ENCODE measurements at regions of chr19 and their contacts with region 1.

Region 1: DNA sequence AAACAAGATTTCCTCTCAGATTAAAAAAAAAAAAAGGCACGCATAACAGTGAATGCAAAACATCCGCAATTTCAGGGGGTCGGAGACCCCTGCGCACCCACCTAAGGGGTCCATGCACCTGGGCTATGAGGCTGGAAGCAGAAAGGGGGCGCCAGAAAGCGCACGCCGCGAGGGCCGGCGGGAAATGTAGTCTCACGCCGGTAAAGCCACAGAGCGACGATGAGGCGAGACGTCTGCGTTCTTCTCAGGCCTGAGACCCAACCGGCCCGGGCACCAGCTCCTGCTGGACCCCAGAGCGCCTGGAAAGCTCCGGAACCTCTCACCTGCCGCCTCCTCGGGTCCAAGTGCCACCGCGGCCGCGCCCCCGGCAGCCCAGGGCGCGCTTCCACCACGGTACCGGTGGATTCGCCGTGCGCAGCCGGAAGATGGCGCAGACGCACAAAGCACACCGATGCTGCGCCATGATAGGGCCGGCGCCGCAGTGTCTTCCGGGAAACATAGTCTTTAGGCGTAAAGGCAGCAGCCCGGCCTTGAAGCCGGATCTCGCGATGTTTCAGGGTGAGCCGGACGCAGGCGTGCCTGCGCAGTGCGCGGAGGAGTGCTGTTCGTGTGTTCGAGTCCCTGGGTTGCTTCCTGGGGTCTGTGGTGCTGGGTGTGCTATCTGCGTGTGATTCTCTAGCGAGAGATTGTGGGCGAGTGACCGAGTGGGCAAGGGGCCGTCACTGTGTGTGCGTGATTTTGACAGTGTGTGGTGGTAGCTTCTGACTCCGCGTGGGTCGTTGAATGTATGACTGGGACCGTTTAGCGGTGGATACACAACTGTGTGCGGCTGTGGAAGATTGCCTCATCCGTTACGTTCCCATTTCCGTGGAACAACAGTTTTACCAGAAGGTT is at the start of gene ZNF582:
- DNase-seq: peak; percentile 95 to 97
- ATAC-seq: peak; percentile 99 to 100 (median 99)
- H3K4me3 ChIP-seq: peak within 1 kb of the TSS; percentile 51 to 97 (median 77)
- H3K27ac ChIP-seq: peak within 1 kb of the TSS; percentile 93 to 99 (median 96)
- H3K4me1 ChIP-seq: peaks cover 0 to 15% (median 10%) of the 10 kb centered on the region in 9 donors
- H3K27me3 ChIP-seq: no peaks in the 10 kb centered on the region
- CTCF ChIP-seq: peak; percentile 69 to 94 (median 80)
- total RNA-seq, gene ZNF582: 3.0 to 6.2 (median 4.5) TPM

Region 2: DNA sequence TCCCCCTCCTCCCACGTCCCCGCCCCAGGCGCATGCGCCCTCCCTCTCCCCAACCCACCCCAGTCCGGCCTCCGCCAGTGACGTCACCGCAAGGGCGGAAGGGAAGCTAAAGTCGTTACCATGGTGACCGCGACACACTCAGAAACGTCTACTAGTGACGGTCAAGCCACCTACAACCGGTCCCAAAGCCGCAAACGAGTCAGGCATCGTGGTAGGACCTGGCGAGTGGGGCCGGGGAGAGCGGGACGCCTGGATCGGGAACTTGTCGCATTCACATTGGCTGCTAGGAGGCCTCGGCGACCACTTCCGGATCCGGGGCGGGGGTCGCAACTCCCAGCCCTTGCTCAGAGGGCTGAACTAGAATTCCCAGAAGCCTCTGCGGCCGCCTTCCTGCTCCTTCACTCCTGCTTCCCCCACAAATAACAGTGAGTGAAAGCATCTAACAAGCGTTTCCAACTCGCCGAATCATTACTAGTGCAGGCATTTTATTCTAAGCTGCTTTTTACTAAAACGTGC is 78.7 kb before region 1 on chr19 and contains the start of gene ZSCAN5A:
- intact Hi-C with region 1: loop called in 2 of 10 experiments (anchors 2 kb)
- DNase-seq: peak; percentile 97 to 99
- ATAC-seq: peak; percentile 91 to 97 (median 95)
- H3K4me3 ChIP-seq: peak within 1 kb of the TSS; percentile 40 to 83 (median 72)
- H3K27ac ChIP-seq: peak within 1 kb of the TSS; percentile 71 to 99 (median 96)
- H3K4me1 ChIP-seq: peaks cover 0 to 49% (median 18%) of the 10 kb centered on the region in 9 donors
- H3K27me3 ChIP-seq: no peaks in the 10 kb centered on the region
- CTCF ChIP-seq: no peak
- total RNA-seq, gene ZSCAN5A: 17.7 to 33.4 (median 21.4) TPM

Region 3: DNA sequence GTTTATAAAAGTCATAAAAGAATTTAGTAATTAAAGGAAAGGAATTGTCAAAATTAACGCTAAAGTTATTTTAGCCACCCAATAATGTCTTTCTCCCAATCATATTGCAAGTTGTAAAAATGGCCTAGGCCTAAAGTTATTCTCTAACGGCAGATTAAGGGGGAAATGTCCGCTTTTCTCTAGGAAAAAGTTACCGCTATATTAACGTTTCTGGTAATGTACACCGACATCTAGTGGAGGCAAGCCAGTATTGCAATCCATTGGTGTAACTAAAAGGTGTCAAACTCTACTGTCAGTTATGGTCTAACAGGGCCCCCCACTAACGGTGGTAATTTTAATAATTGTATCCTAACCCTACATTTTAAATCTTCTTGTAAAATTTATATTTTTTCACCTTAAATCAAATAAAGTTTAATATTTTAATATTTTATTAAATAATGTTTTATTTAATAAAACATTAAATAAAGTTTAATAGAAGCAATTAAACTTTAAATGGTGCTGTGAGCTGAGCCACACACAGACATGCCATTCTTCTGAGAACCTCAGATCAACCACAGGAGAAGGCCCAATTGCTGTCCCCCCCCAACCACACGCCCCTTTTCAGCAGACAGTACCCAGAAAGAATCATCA is 42.8 kb before region 1 on chr19:
- intact Hi-C with region 1: no loop called
- DNase-seq: peak in 1 of 2 donors; percentile 54
- ATAC-seq: peak in 1 of 8 donors; percentile 56
- H3K4me3 ChIP-seq: no peak overlapping the region
- H3K27ac ChIP-seq: no peak overlapping the region
- H3K4me1 ChIP-seq: no peaks in the 10 kb centered on the region
- H3K27me3 ChIP-seq: no peaks in the 10 kb centered on the region
- CTCF ChIP-seq: peak; percentile 80 to 95 (median 89)

Region 4: GRCh38 chr19:56538254-56538760 is 144.9 kb after region 1 on chr19:
- intact Hi-C with region 1: loop called in 1 of 10 experiments (anchors 1 kb)
- DNase-seq: peak; percentile 94 to 95
- ATAC-seq: peak; percentile 97 to 100 (median 99)
- H3K4me3 ChIP-seq: peak overlapping the region; percentile 59 to 93 (median 75)
- H3K27ac ChIP-seq: peak overlapping the region; percentile 87 to 99 (median 95)
- H3K4me1 ChIP-seq: peaks cover 0 to 22% (median 14%) of the 10 kb centered on the region in 9 donors
- H3K27me3 ChIP-seq: no peaks in the 10 kb centered on the region
- CTCF ChIP-seq: no peak